Naive thymus-derived CD4-positive, alpha-beta T cell (primary cell): ENCODE measurements at regions of chr9 and their contacts with region 1.

Region 1: GRCh38 chr9:33374634-33375213 is 27.6 kb downstream of the AQP7 start:
- DNase-seq: peak; percentile 29 to 76 (median 70)
- ATAC-seq: peak; percentile 94
- H3K4me3 ChIP-seq: no peak overlapping the region
- H3K4me3 Mint-ChIP-seq: peak overlapping the region in 9 of 10 donors; percentile 19 to 81 (median 75)
- H3K27ac ChIP-seq: peak overlapping the region; percentile 0
- H3K27ac Mint-ChIP-seq: peak overlapping the region in 8 of 9 donors; percentile 49 to 87 (median 76)
- H3K4me1 ChIP-seq: peaks cover 0 to 5% of the 10 kb centered on the region in 2 donors
- H3K4me1 Mint-ChIP-seq: peaks cover 10 to 17% (median 13%) of the 10 kb centered on the region in 7 donors
- H3K27me3 ChIP-seq: no peaks in the 10 kb centered on the region
- H3K27me3 Mint-ChIP-seq: no peaks in the 10 kb centered on the region

Region 2: DNA sequence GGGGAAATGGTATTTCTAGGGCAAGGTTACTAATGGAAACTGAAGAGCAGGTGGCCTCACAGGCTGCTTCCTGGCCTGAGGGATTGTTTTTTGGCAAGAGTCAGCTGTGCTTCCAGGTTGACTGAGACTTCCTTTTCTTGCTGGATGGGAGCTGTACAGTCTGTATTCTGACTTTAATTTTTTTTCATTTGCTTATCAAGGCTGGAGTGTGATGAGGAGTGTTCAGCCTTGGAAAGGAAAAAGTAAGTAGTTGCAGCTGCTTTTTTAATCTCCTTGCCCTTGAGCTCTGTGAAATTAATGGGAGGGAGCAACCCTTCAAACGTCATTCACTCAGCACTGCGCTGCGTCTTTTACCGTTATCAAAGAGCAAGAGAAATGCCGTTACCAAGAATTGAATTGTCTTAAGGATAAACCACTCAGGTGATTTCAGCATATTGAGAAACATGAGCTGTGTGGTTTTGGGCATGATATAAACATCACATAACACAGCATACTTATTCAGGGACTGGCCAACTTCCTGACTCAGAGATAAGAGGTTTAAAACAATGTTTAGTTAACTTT is 20.0 kb before region 1 on chr9:
- CTCF ChIA-PET with region 1: interaction called, 4 read pairs
- POLR2A ChIA-PET with region 1: interaction called, 4 read pairs
- intact Hi-C with region 1: loop called in 1 of 2 experiments (anchors 1 kb)
- DNase-seq: peak in 2 of 9 donors; percentile 6 to 29
- ATAC-seq: peak; percentile 67
- H3K4me3 ChIP-seq: no peak overlapping the region
- H3K4me3 Mint-ChIP-seq: peak overlapping the region in 1 of 10 donors; percentile 10
- H3K27ac ChIP-seq: no peak overlapping the region
- H3K27ac Mint-ChIP-seq: peak overlapping the region in 8 of 9 donors; percentile 42 to 82 (median 58)
- H3K4me1 ChIP-seq: no peaks in the 10 kb centered on the region
- H3K4me1 Mint-ChIP-seq: peaks cover 0 to 12% (median 8%) of the 10 kb centered on the region in 7 donors
- H3K27me3 ChIP-seq: no peaks in the 10 kb centered on the region
- H3K27me3 Mint-ChIP-seq: no peaks in the 10 kb centered on the region

Region 3: GRCh38 chr9:33415501-33416038 is 40.8 kb after region 1 on chr9:
- CTCF ChIA-PET with region 1: interaction called, 34 read pairs
- POLR2A ChIA-PET with region 1: interaction called, 3 read pairs
- intact Hi-C with region 1: loop called (anchors 1 to 2 kb)
- DNase-seq: peak; percentile 82 to 98 (median 96)
- ATAC-seq: peak; percentile 97
- H3K4me3 ChIP-seq: peak overlapping the region; percentile 25
- H3K4me3 Mint-ChIP-seq: peak overlapping the region; percentile 74 to 89 (median 84)
- H3K27ac ChIP-seq: peak overlapping the region; percentile 75
- H3K27ac Mint-ChIP-seq: peak overlapping the region; percentile 93 to 99 (median 97)
- H3K4me1 ChIP-seq: peaks cover 34 to 44% of the 10 kb centered on the region in 2 donors
- H3K4me1 Mint-ChIP-seq: peaks cover 31 to 51% (median 45%) of the 10 kb centered on the region in 7 donors
- H3K27me3 ChIP-seq: no peaks in the 10 kb centered on the region
- H3K27me3 Mint-ChIP-seq: peaks cover 0 to 8% (median 0%) of the 10 kb centered on the region in 5 donors

Region 4: DNA sequence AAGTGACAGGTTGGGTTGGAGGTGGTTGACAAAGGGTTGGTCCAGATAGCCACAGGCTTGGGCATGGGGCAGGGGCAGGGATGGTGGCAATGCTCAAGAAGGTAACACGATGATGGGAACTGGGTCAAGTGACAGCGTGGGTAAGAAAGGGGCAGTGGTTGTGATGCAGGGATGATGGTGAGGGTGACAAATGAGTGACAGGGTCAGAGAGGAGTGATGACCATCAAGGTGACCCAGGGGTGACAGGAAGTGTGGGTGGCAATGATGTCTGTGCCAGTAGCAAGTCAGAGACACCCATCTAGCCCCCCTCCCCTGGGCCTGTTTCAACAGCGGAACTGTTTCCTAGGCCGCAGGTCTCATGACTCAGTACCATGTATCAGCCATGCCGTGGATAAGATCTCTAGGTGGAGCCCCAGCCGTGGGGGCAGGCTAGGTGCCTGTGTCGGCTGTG is 52.1 kb after region 1 on chr9:
- CTCF ChIA-PET with region 1: no interaction called
- POLR2A ChIA-PET with region 1: no interaction called
- intact Hi-C with region 1: no loop called
- DNase-seq: no peak
- ATAC-seq: peak; percentile 64
- H3K4me3 ChIP-seq: no peak overlapping the region
- H3K4me3 Mint-ChIP-seq: no peak overlapping the region
- H3K27ac ChIP-seq: no peak overlapping the region
- H3K27ac Mint-ChIP-seq: peak overlapping the region in 2 of 9 donors; percentile 26 to 61
- H3K4me1 ChIP-seq: no peaks in the 10 kb centered on the region
- H3K4me1 Mint-ChIP-seq: peaks cover 0 to 11% (median 0%) of the 10 kb centered on the region in 7 donors
- H3K27me3 ChIP-seq: no peaks in the 10 kb centered on the region
- H3K27me3 Mint-ChIP-seq: no peaks in the 10 kb centered on the region

Region 5: DNA sequence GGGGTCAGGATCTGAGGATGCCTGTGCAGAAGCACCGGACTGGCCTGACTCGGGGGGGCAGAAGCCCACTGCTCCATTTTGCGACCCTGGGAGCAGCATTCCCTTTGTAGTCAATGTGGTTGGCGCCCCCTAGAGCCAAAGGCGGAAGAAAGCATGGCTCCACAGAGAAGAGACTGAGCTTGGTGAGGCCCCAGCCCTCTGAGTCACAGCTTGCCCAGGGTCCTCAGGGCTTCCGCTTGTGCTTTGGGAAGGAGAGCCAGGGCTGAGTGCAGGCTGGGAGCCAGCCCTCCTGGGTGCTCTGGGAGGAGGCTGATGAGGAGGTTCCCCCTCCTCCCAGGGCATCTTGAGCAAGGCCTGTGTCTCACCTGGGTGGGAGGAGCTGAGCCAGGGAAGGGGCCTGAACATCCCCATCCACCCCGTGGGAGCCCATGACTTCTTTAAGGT is 78.1 kb after region 1 on chr9:
- CTCF ChIA-PET with region 1: interaction called, 14 read pairs
- POLR2A ChIA-PET with region 1: interaction called, 4 read pairs
- intact Hi-C with region 1: no loop called
- DNase-seq: peak in 4 of 9 donors; percentile 25 to 51 (median 40)
- ATAC-seq: peak; percentile 63
- H3K4me3 ChIP-seq: no peak overlapping the region
- H3K4me3 Mint-ChIP-seq: peak overlapping the region in 5 of 10 donors; percentile 25 to 67 (median 36)
- H3K27ac ChIP-seq: peak overlapping the region; percentile 37
- H3K27ac Mint-ChIP-seq: peak overlapping the region in 8 of 9 donors; percentile 59 to 95 (median 82)
- H3K4me1 ChIP-seq: peaks cover 39 to 56% of the 10 kb centered on the region in 2 donors
- H3K4me1 Mint-ChIP-seq: peaks cover 40 to 64% (median 56%) of the 10 kb centered on the region in 7 donors
- H3K27me3 ChIP-seq: no peaks in the 10 kb centered on the region
- H3K27me3 Mint-ChIP-seq: no peaks in the 10 kb centered on the region

Region 6: GRCh38 chr9:33473643-33474352 is 99.1 kb after region 1 on chr9 and contains the start of gene NOL6:
- CTCF ChIA-PET with region 1: interaction called, 51 read pairs
- POLR2A ChIA-PET with region 1: interaction called, 4 read pairs
- intact Hi-C with region 1: loop called in 1 of 2 experiments (anchors 2 kb)
- DNase-seq: peak; percentile 91 to 99 (median 98)
- ATAC-seq: peak; percentile 100
- H3K4me3 ChIP-seq: peak within 1 kb of the TSS; percentile 88
- H3K4me3 Mint-ChIP-seq: peak within 1 kb of the TSS; percentile 88 to 100 (median 97)
- H3K27ac ChIP-seq: peak within 1 kb of the TSS; percentile 78
- H3K27ac Mint-ChIP-seq: peak within 1 kb of the TSS; percentile 88 to 99 (median 96)
- H3K4me1 ChIP-seq: peaks cover 13 to 19% of the 10 kb centered on the region in 2 donors
- H3K4me1 Mint-ChIP-seq: peaks cover 9 to 38% (median 31%) of the 10 kb centered on the region in 7 donors
- H3K27me3 ChIP-seq: no peaks in the 10 kb centered on the region
- H3K27me3 Mint-ChIP-seq: no peaks in the 10 kb centered on the region
- total RNA-seq, gene NOL6: 34.0 to 48.0 (median 44.0) TPM

Region 7: DNA sequence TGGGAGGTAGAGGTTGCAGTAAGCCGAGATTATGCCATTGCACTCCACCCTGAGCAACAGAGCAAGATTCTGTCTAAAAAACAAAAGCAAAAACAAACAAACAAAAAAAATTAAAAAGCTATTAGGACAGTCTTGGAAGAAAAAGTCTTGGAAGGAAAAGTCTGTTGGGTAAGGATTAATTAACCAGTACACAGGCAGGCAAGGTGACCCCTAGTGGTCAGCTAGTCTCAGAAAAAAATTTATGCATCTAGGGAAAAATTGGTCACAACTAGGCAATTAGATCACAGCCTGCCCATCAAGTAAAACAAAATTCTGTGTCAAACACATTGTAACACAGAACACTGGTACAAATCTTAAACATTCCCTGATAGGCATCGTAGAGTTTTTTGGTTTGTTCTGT is 142.6 kb after region 1 on chr9:
- CTCF ChIA-PET with region 1: interaction called, 4 read pairs
- POLR2A ChIA-PET with region 1: no interaction called
- intact Hi-C with region 1: loop called in 1 of 2 experiments (anchors 1 kb)
- DNase-seq: peak in 1 of 9 donors; percentile 22
- ATAC-seq: peak; percentile 46
- H3K4me3 ChIP-seq: no peak overlapping the region
- H3K4me3 Mint-ChIP-seq: no peak overlapping the region
- H3K27ac ChIP-seq: no peak overlapping the region
- H3K27ac Mint-ChIP-seq: no peak overlapping the region
- H3K4me1 ChIP-seq: no peaks in the 10 kb centered on the region
- H3K4me1 Mint-ChIP-seq: no peaks in the 10 kb centered on the region
- H3K27me3 ChIP-seq: peaks cover 0 to 4% of the 10 kb centered on the region in 2 donors
- H3K27me3 Mint-ChIP-seq: peaks cover 9 to 41% (median 16%) of the 10 kb centered on the region in 5 donors

Region 8: DNA sequence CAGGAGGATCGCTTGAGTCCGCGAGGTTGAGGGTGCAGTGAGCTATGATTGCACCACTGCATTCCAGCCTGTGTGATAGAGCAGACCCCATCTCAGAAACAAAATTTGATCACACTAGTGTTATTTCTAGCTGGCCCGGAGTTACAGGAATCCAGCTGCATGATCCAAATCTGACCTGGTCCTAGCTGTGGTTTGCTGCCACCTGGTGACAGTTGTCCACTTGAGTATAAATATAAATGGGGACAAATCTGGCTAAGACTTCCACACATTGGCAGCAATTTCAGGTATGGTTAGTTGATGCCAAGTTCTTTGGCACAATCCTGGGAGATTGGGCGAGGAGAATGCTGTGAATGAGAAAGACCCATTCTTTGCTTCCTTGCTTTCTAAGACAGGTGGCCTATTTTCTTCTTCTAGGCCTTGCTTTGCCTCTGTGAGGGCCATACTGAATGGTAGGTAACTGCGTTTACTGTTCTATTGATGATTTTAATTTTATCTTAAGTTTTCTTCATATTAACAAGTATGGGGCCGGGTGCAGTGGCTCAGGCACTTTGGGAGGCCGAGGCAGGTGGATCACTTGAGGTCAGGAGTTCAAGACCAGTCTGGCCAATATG is 477.6 kb after region 1 on chr9:
- CTCF ChIA-PET with region 1: no interaction called
- POLR2A ChIA-PET with region 1: no interaction called
- intact Hi-C with region 1: no loop called
- DNase-seq: peak in 8 of 9 donors; percentile 20 to 53 (median 46)
- ATAC-seq: peak; percentile 85
- H3K4me3 ChIP-seq: no peak overlapping the region
- H3K4me3 Mint-ChIP-seq: no peak overlapping the region
- H3K27ac ChIP-seq: no peak overlapping the region
- H3K27ac Mint-ChIP-seq: peak overlapping the region in 3 of 9 donors; percentile 72 to 86 (median 80)
- H3K4me1 ChIP-seq: peaks cover 0 to 2% of the 10 kb centered on the region in 2 donors
- H3K4me1 Mint-ChIP-seq: peaks cover 16 to 60% (median 50%) of the 10 kb centered on the region in 7 donors
- H3K27me3 ChIP-seq: no peaks in the 10 kb centered on the region
- H3K27me3 Mint-ChIP-seq: no peaks in the 10 kb centered on the region